ENCODE measurements at regions of chr5 and their contacts with region 1.

Region 1: DNA sequence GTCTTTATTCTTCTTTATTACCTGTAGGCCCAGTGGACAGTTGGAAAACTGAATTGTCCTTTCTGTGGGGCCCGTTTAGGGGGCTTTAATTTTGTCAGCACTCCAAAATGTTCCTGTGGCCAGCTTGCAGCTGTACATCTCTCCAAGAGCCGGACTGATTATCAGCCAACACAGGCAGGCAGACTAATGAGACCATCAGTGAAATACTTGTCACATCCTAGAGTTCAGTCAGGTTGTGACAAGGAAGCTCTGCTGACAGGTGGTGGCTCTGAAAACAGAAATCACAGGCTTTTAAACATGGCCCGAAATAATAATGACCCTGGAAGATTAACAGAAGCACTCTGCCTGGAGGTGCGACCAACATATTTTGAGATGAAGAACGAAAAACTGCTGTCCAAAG is 47.9 kb downstream of the RNF180 start:
- DNase-seq: no peak
- H3K4me3 ChIP-seq: no peak overlapping the region
- H3K27ac ChIP-seq: no peak overlapping the region
- H3K4me1 ChIP-seq: peaks cover 0 to 5% of the 10 kb centered on the region in 2 experiments; a peak in 2 of 4 replicates
- H3K27me3 ChIP-seq: no peaks in the 10 kb centered on the region
- CTCF ChIP-seq: no peak
- EP300 ChIP-seq: no peak
- RAD21 ChIP-seq: no peak

Region 2: DNA sequence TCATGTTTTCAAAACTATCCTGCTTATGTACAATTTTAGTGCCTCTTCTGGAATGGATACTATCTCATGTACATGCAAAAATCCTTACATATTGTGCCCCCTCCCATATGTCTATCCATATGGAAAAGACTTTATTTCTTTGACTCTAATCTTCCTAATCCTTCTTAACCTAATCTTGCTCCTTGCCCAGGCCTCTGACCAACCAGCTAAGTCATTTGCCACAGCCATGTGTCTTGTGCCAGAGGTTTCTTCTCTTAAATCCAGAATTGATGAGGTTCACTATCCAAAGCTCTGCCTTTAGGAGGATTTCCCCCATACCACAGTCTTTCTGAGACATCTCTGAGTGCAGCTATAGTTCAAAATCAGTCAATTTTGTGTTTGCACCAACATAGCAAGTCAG is 116.8 kb before region 1 on chr5:
- CTCF ChIA-PET with region 1: no interaction called
- POLR2A ChIA-PET with region 1: no interaction called
- DNase-seq: no peak
- H3K4me3 ChIP-seq: no peak overlapping the region
- H3K27ac ChIP-seq: no peak overlapping the region
- H3K4me1 ChIP-seq: no peaks in the 10 kb centered on the region
- H3K27me3 ChIP-seq: no peaks in the 10 kb centered on the region
- CTCF ChIP-seq: no peak
- EP300 ChIP-seq: no peak
- RAD21 ChIP-seq: no peak

Region 3: GRCh38 chr5:64229163-64229774 is 15.7 kb after region 1 on chr5:
- CTCF ChIA-PET with region 1: interaction called, 24 read pairs
- POLR2A ChIA-PET with region 1: no interaction called
- DNase-seq: peak; percentile 57
- H3K4me3 ChIP-seq: peak overlapping the region in 1 of 2 experiments; percentile 30; a peak in 1 of 4 replicates
- H3K27ac ChIP-seq: no peak overlapping the region
- H3K4me1 ChIP-seq: no peaks in the 10 kb centered on the region
- H3K27me3 ChIP-seq: no peaks in the 10 kb centered on the region
- CTCF ChIP-seq: peak; percentile 80
- EP300 ChIP-seq: no peak
- RAD21 ChIP-seq: peak; percentile 68

Region 4: GRCh38 chr5:64331597-64332277 is 118.2 kb after region 1 on chr5:
- CTCF ChIA-PET with region 1: no interaction called
- POLR2A ChIA-PET with region 1: no interaction called
- DNase-seq: no peak
- H3K4me3 ChIP-seq: no peak overlapping the region
- H3K27ac ChIP-seq: no peak overlapping the region
- H3K4me1 ChIP-seq: no peaks in the 10 kb centered on the region
- H3K27me3 ChIP-seq: no peaks in the 10 kb centered on the region
- CTCF ChIP-seq: no peak
- EP300 ChIP-seq: no peak
- RAD21 ChIP-seq: no peak